ENCODE measurements at regions of chr4 and their contacts with region 1.

Region 1: GRCh38 chr4:77819843-77820648 is 878 bp upstream of the CNOT6L start:
- DNase-seq: peak; percentile 95
- ATAC-seq: peak; percentile 94

Region 2: GRCh38 chr4:77862478-77863216 is 42.6 kb after region 1 on chr4 and contains the start of gene MRPL1:
- intact Hi-C with region 1: loop called (anchors 2 kb)
- DNase-seq: peak; percentile 92
- ATAC-seq: peak; percentile 98
- total RNA-seq, gene MRPL1: 44.8 TPM